CD4-positive, alpha-beta memory T cell (primary cell): ENCODE measurements at regions of chr1 and their contacts with region 1.

Region 1: DNA sequence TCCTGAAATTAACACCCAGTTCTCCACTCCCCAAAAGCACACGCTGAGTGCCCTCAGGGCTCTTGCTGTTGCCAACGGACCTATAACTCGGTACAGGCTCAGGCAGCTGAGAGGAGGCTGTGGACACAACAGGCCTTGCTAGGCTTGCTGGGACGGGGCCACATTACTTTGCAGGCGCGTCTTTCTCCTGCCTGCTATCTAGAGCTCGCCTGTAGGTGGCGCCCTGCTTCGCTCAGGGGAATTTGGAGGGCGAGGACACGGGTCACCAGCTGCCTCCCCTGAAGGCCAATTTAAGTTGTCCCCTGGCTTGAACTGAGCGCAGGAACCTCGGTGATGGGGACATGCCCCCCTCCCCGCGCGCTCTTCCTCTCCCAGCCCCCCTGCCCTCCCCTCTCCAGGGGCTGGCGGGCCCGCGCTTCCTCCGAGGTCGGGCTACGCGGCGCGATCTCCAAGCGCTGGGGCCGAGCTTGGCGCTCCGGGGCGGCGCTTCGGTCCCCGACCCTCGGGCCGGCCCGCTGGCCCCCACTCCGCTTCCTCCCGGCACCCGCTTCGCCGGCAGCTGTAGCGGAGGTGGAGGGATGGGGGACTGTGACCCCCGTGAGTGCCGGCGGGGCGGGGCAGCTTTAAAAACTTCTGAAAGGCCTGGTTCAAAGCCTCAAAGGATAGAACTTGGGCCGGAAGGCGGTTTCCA is 32.4 kb upstream of the NFIA start:
- DNase-seq: peak; percentile 80 to 87 (median 81)
- H3K4me3 ChIP-seq: peak overlapping the region; percentile 36 to 72
- H3K4me3 Mint-ChIP-seq: peak overlapping the region; percentile 81 to 91 (median 83)
- H3K27ac ChIP-seq: peak overlapping the region; percentile 25
- H3K27ac Mint-ChIP-seq: peak overlapping the region in 1 of 7 donors; percentile 55
- H3K4me1 ChIP-seq: peaks cover 37% of the 10 kb centered on the region
- H3K4me1 Mint-ChIP-seq: peaks cover 13 to 35% (median 24%) of the 10 kb centered on the region in 4 donors
- H3K27me3 ChIP-seq: peaks cover 5% of the 10 kb centered on the region
- H3K27me3 Mint-ChIP-seq: peaks cover 21 to 32% of the 10 kb centered on the region in 2 donors

Region 2: GRCh38 chr1:61083807-61084440 is 33.9 kb after region 1 on chr1:
- CTCF ChIA-PET with region 1: interaction called, 84 read pairs
- POLR2A ChIA-PET with region 1: interaction called, 62 read pairs
- intact Hi-C with region 1: no loop called
- DNase-seq: no peak
- H3K4me3 ChIP-seq: peak overlapping the region in 1 of 2 donors; percentile 71
- H3K4me3 Mint-ChIP-seq: peak overlapping the region; percentile 79 to 93 (median 91)
- H3K27ac ChIP-seq: no peak overlapping the region
- H3K27ac Mint-ChIP-seq: peak overlapping the region; percentile 66 to 84 (median 72)
- H3K4me1 ChIP-seq: peaks cover 37% of the 10 kb centered on the region
- H3K4me1 Mint-ChIP-seq: peaks cover 20 to 45% (median 27%) of the 10 kb centered on the region in 4 donors
- H3K27me3 ChIP-seq: no peaks in the 10 kb centered on the region
- H3K27me3 Mint-ChIP-seq: peaks cover 0 to 2% of the 10 kb centered on the region in 2 donors

Region 3: DNA sequence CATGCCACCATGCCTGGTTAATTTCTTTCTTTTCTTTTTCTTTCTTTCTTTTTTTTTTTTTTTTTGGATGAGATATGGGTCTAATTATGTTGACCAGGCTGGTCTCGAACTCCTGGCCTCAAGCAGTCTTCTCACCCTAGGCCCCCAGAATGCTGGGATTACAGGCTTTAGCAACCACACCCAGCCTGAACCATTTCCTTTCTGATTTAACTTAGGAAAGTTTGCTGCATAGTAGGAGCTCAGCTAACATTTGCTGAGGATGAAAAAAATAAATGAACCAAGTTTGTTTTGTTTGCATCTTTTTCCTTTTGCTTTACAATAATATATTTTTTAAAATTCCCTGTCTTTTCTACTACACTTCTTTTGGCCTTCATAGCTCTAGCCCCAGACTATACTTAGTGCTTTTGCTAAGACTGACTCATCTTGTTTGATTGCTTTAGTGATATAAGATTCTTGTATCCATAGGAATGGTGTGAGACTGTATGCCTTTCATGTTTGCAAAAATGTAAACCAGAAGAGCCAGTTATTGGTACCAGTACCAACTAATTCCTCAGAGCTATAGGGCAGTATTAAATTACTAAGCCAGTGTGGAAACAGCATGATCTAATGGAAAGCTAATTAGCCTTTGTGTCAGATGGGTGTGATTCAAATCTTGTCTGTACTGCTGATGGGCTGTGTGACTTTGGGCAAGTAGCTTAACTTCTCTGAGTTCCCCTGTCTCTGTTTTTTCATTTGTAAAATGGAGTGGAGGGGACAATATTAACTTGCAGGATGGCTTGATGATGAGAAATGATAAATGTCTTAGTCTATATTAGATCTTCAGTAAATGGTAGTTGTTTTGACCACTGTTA is 99.2 kb after region 1 on chr1:
- CTCF ChIA-PET with region 1: no interaction called
- POLR2A ChIA-PET with region 1: no interaction called
- intact Hi-C with region 1: no loop called
- DNase-seq: no peak
- H3K4me3 ChIP-seq: no peak overlapping the region
- H3K4me3 Mint-ChIP-seq: no peak overlapping the region
- H3K27ac ChIP-seq: no peak overlapping the region
- H3K27ac Mint-ChIP-seq: no peak overlapping the region
- H3K4me1 ChIP-seq: no peaks in the 10 kb centered on the region
- H3K4me1 Mint-ChIP-seq: no peaks in the 10 kb centered on the region
- H3K27me3 ChIP-seq: no peaks in the 10 kb centered on the region
- H3K27me3 Mint-ChIP-seq: no peaks in the 10 kb centered on the region

Region 4: GRCh38 chr1:61210435-61211154 is 160.6 kb after region 1 on chr1:
- CTCF ChIA-PET with region 1: interaction called, 26 read pairs
- POLR2A ChIA-PET with region 1: no interaction called
- intact Hi-C with region 1: loop called (anchors 1 kb)
- DNase-seq: peak in 2 of 5 donors; percentile 9 to 11
- H3K4me3 ChIP-seq: no peak overlapping the region
- H3K4me3 Mint-ChIP-seq: no peak overlapping the region
- H3K27ac ChIP-seq: no peak overlapping the region
- H3K27ac Mint-ChIP-seq: no peak overlapping the region
- H3K4me1 ChIP-seq: no peaks in the 10 kb centered on the region
- H3K4me1 Mint-ChIP-seq: no peaks in the 10 kb centered on the region
- H3K27me3 ChIP-seq: no peaks in the 10 kb centered on the region
- H3K27me3 Mint-ChIP-seq: no peaks in the 10 kb centered on the region

Region 5: GRCh38 chr1:61318319-61319125 is 268.5 kb after region 1 on chr1:
- CTCF ChIA-PET with region 1: no interaction called
- POLR2A ChIA-PET with region 1: no interaction called
- intact Hi-C with region 1: loop called (anchors 10 kb)
- DNase-seq: no peak
- H3K4me3 ChIP-seq: no peak overlapping the region
- H3K4me3 Mint-ChIP-seq: peak overlapping the region in 1 of 8 donors; percentile 39
- H3K27ac ChIP-seq: no peak overlapping the region
- H3K27ac Mint-ChIP-seq: no peak overlapping the region
- H3K4me1 ChIP-seq: no peaks in the 10 kb centered on the region
- H3K4me1 Mint-ChIP-seq: peaks cover 3 to 8% (median 4%) of the 10 kb centered on the region in 4 donors
- H3K27me3 ChIP-seq: no peaks in the 10 kb centered on the region
- H3K27me3 Mint-ChIP-seq: no peaks in the 10 kb centered on the region

Region 6: DNA sequence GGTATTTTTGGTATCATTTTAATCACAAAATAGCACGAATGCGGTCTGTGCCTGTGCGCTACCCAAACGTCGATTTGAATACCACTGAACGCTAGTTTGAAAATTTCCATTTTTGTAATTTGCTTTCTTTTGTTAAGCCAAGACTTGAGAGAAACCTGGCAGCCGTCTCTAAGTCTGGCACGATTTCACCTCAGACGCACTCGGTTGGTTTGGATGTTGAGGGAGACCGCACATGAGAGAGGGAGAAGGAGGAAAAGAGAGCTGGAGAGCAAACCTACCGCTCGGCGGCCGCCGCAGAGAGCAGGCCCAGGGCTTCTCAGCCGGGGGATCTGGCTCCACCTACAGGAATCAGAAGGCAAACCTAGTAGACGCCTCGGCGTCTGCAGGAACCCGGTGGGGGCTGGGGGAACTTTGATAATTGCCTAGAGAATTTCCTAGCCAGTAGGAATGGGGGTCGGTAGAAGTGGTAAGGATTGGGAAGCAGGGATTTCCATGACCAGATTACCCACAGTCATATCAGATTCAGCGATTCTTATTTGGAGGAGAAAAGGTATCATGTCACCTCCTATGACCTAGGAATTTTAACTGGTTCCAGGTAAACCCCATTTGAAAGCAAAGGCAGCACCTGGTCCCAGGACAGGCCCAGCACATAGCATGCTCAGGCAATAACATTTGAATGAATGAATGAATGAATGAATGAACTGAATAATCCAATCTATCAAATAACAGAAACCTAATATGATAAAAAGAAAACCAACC is 591.8 kb after region 1 on chr1:
- CTCF ChIA-PET with region 1: interaction called, 14 read pairs
- POLR2A ChIA-PET with region 1: no interaction called
- intact Hi-C with region 1: loop called (anchors 1 kb)
- DNase-seq: peak; percentile 31 to 51 (median 46)
- H3K4me3 ChIP-seq: peak overlapping the region in 1 of 2 donors; percentile 14
- H3K4me3 Mint-ChIP-seq: peak overlapping the region; percentile 56 to 86 (median 72)
- H3K27ac ChIP-seq: no peak overlapping the region
- H3K27ac Mint-ChIP-seq: no peak overlapping the region
- H3K4me1 ChIP-seq: peaks cover 4% of the 10 kb centered on the region
- H3K4me1 Mint-ChIP-seq: peaks cover 4 to 14% (median 9%) of the 10 kb centered on the region in 4 donors
- H3K27me3 ChIP-seq: no peaks in the 10 kb centered on the region
- H3K27me3 Mint-ChIP-seq: peaks cover 0 to 4% of the 10 kb centered on the region in 2 donors